ENCODE measurements at regions of chr6 and their contacts with region 1.

Region 1: GRCh38 chr6:137927777-137928218 is 60.7 kb downstream of the TNFAIP3 start:
- DNase-seq: peak; percentile 94
- H3K4me3 Mint-ChIP-seq: peak overlapping the region; percentile 68
- H3K27ac Mint-ChIP-seq: peak overlapping the region; percentile 93
- H3K4me1 Mint-ChIP-seq: peaks cover 63% of the 10 kb centered on the region
- H3K27me3 Mint-ChIP-seq: no peaks in the 10 kb centered on the region

Region 2: GRCh38 chr6:137717074-137718073 is 210.4 kb before region 1 on chr6:
- intact Hi-C with region 1: loop called (anchors 2 kb)
- DNase-seq: peak; percentile 95
- H3K4me3 Mint-ChIP-seq: peak overlapping the region; percentile 13
- H3K27ac Mint-ChIP-seq: peak overlapping the region; percentile 91
- H3K4me1 Mint-ChIP-seq: peaks cover 51% of the 10 kb centered on the region
- H3K27me3 Mint-ChIP-seq: no peaks in the 10 kb centered on the region

Region 3: GRCh38 chr6:137846772-137847313 is 81.0 kb before region 1 on chr6:
- intact Hi-C with region 1: no loop called
- DNase-seq: no peak
- H3K4me3 Mint-ChIP-seq: no peak overlapping the region
- H3K27ac Mint-ChIP-seq: no peak overlapping the region
- H3K4me1 Mint-ChIP-seq: peaks cover 14% of the 10 kb centered on the region
- H3K27me3 Mint-ChIP-seq: no peaks in the 10 kb centered on the region

Region 4: GRCh38 chr6:137873273-137873762 is 54.5 kb before region 1 on chr6:
- intact Hi-C with region 1: loop called (anchors 1 kb)
- DNase-seq: peak; percentile 89
- H3K4me3 Mint-ChIP-seq: peak overlapping the region; percentile 87
- H3K27ac Mint-ChIP-seq: peak overlapping the region; percentile 86
- H3K4me1 Mint-ChIP-seq: peaks cover 44% of the 10 kb centered on the region
- H3K27me3 Mint-ChIP-seq: no peaks in the 10 kb centered on the region

Region 5: GRCh38 chr6:137909533-137909932 is 18.3 kb before region 1 on chr6:
- intact Hi-C with region 1: loop called (anchors 1 kb)
- DNase-seq: no peak
- H3K4me3 Mint-ChIP-seq: peak overlapping the region; percentile 72
- H3K27ac Mint-ChIP-seq: peak overlapping the region; percentile 90
- H3K4me1 Mint-ChIP-seq: peaks cover 53% of the 10 kb centered on the region
- H3K27me3 Mint-ChIP-seq: no peaks in the 10 kb centered on the region

Region 6: GRCh38 chr6:137967689-137968454 is 40.1 kb after region 1 on chr6:
- intact Hi-C with region 1: loop called (anchors 1 kb)
- DNase-seq: peak; percentile 58
- H3K4me3 Mint-ChIP-seq: peak overlapping the region; percentile 22
- H3K27ac Mint-ChIP-seq: peak overlapping the region; percentile 76
- H3K4me1 Mint-ChIP-seq: peaks cover 51% of the 10 kb centered on the region
- H3K27me3 Mint-ChIP-seq: no peaks in the 10 kb centered on the region

Measured in activated CD4-positive, alpha-beta T cell treated with anti-CD3 and anti-CD28 coated beads, Interleukin-2, amount 10 ng/mL, durations not matched to agents 24 days and 14 days (primary cell).